ENCODE measurements at regions of chr3 and their contacts with region 1.

Region 1: GRCh38 chr3:85576091-85576690 is 617.4 kb downstream of the CADM2 start:
- DNase-seq: peak; percentile 58 to 93 (median 80)
- H3K4me3 ChIP-seq: peak overlapping the region in 40 of 59 donors; percentile 1 to 55 (median 28)
- H3K27ac ChIP-seq: peak overlapping the region; percentile 0 to 94 (median 81)
- H3K27me3 ChIP-seq: no peaks in the 10 kb centered on the region
- CTCF ChIP-seq: peak; percentile 80 to 98 (median 92)

Region 2: DNA sequence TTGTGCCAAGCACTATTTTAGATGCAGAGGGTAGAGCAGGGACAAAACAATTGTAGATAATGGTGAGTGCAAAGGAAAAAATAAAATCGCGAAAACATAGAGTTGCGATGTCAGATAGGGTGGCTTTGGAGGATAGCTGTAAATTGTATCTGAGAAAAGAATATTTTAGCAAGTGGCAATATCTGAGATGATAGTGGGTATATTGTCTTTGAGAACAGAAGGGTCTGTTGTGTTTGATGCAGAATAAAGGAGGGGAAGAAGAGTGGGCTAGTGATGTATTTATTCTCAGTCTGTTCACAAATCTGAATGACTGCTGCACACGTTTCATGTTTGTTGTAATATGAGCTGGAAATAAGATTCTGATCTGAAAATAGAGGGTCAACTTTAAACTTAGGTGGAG is 220.6 kb before region 1 on chr3:
- intact Hi-C with region 1: loop called (anchors 10 kb)
- DNase-seq: no peak
- H3K4me3 ChIP-seq: peak overlapping the region in 47 of 59 donors; percentile 2 to 60 (median 37)
- H3K27ac ChIP-seq: peak overlapping the region in 57 of 59 donors; percentile 7 to 88 (median 73)
- H3K27me3 ChIP-seq: no peaks in the 10 kb centered on the region
- CTCF ChIP-seq: peak in 2 of 56 donors; percentile 9 to 25